ENCODE measurements at regions of chr13 and their contacts with region 1.

Region 1: DNA sequence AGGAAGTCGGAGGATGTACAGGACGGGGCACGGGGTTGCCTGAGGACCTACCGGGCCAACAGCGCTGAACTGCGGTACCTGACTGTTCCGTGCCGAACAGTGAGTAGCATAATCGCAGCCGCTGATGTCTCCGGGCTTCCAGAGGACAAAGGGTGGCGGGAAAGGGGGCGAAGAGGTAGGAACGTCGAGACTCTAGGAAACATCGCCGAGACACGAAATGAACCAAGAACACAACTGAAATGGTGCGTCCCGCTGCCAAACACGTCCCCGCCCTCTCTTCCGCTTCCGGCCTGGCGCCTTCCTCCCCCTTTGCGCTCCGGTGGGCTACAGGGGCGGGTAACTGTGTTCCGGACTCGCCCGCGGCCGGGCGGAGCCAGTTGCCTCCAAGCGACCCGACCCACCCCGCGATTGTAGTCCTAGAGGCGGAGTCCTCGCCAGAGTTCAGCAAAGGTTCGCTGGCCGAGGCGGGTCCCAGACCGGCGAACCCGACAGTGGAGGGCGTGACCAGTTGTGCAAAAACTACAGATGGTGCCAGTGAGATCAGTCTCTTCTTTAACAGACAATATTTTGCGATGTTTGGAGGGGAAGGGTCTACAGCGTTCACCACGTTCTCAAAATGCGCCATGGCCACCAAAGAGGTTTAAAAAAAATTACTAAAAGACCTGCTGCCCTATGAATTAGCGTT is at the start of gene MRPS31:
- DNase-seq: peak; percentile 97
- ATAC-seq: peak; percentile 99
- H3K4me3 Mint-ChIP-seq: peak within 1 kb of the TSS; percentile 89
- H3K27ac Mint-ChIP-seq: peak within 1 kb of the TSS; percentile 97
- H3K4me1 Mint-ChIP-seq: peaks cover 30% of the 10 kb centered on the region
- H3K27me3 Mint-ChIP-seq: no peaks in the 10 kb centered on the region
- total RNA-seq, gene MRPS31: 45.8 to 46.1 TPM

Region 2: DNA sequence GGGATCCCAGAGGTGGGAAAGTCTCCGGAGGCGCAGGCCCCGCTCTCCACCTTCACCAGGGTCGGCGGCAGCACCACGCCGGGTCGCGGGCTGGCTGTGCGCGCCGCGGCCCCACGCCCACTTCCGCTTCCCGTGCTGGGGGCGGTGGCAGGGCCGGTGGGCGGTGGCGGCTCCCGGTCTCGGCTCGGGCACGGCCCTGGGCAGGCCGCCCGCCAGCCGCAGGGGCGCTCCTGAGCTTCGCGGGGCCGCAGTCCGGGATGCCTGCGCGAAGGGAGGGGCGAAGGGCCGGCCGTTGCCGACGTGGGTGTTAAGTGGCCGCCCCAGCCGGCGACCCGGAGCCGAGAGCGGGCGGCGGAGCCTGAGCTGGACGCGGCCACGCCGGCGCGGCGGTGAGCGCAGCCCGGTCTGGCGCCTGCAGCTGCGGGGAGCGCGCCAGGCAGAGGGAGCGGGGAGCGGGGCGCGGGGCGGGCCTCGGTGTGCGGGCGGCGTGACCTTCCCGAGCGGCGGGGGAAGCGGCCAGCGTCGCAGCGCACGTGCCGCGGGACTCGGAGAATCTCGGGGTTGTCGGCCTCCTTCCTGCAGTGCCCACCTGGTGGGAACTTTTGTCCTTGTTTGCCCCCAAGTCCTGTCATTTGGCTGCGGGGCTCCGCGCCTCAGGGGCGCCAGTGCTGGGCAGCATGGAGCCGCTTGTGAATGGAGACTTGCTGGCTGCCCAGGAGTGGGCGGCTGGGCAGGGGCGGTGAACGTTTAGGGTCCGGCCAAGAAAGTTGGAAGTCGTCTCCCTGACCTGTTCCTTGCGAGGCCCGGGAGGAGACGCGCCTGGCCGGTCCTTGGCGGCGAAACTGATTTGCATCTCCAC is 18.4 kb after region 1 on chr13 and contains the start of gene SLC25A15:
- CTCF ChIA-PET with region 1: interaction called, 5 read pairs
- POLR2A ChIA-PET with region 1: no interaction called
- intact Hi-C with region 1: loop called in 1 of 2 experiments (anchors 1 kb)
- DNase-seq: peak; percentile 79
- ATAC-seq: peak; percentile 79
- H3K4me3 Mint-ChIP-seq: peak within 1 kb of the TSS; percentile 82
- H3K27ac Mint-ChIP-seq: peak within 1 kb of the TSS; percentile 83
- H3K4me1 Mint-ChIP-seq: peaks cover 27% of the 10 kb centered on the region
- H3K27me3 Mint-ChIP-seq: no peaks in the 10 kb centered on the region
- total RNA-seq, gene SLC25A15: 20.5 to 23.6 TPM

Measured in activated CD4-positive, alpha-beta T cell treated with anti-CD3 and anti-CD28 coated beads for 36 hours (primary cell).